Sigmoid colon (tissue), 7 donors: ENCODE measurements at regions of chr1 and their contacts with region 1.

Region 1: GRCh38 chr1:16613185-16614147 is at the start of gene NBPF1:
- DNase-seq: peak; percentile 99
- H3K4me3 ChIP-seq: peak within 1 kb of the TSS; percentile 51 to 65 (median 55)
- H3K27ac ChIP-seq: peak within 1 kb of the TSS; percentile 76 to 84 (median 80)
- H3K4me1 ChIP-seq: peaks cover 0 to 24% (median 21%) of the 10 kb centered on the region in 4 donors
- H3K27me3 ChIP-seq: no peaks in the 10 kb centered on the region
- CTCF ChIP-seq: no peak
- EP300 ChIP-seq: peak in 2 of 4 donors; percentile 10 to 57
- POLR2A ChIP-seq: peak; percentile 75 to 89
- total RNA-seq, gene NBPF1: 30.3 to 80.9 (median 37.2) TPM

Region 2: GRCh38 chr1:16644193-16644481 is 30.7 kb after region 1 on chr1:
- intact Hi-C with region 1: loop called (anchors 2 kb)
- DNase-seq: no peak
- H3K4me3 ChIP-seq: peak overlapping the region; percentile 48 to 62 (median 60)
- H3K27ac ChIP-seq: peak overlapping the region; percentile 79 to 83 (median 80)
- H3K4me1 ChIP-seq: peaks cover 0 to 37% (median 32%) of the 10 kb centered on the region in 4 donors
- H3K27me3 ChIP-seq: peaks cover 0 to 12% (median 0%) of the 10 kb centered on the region in 3 donors
- CTCF ChIP-seq: no peak
- EP300 ChIP-seq: no peak
- POLR2A ChIP-seq: no peak

Region 3: DNA sequence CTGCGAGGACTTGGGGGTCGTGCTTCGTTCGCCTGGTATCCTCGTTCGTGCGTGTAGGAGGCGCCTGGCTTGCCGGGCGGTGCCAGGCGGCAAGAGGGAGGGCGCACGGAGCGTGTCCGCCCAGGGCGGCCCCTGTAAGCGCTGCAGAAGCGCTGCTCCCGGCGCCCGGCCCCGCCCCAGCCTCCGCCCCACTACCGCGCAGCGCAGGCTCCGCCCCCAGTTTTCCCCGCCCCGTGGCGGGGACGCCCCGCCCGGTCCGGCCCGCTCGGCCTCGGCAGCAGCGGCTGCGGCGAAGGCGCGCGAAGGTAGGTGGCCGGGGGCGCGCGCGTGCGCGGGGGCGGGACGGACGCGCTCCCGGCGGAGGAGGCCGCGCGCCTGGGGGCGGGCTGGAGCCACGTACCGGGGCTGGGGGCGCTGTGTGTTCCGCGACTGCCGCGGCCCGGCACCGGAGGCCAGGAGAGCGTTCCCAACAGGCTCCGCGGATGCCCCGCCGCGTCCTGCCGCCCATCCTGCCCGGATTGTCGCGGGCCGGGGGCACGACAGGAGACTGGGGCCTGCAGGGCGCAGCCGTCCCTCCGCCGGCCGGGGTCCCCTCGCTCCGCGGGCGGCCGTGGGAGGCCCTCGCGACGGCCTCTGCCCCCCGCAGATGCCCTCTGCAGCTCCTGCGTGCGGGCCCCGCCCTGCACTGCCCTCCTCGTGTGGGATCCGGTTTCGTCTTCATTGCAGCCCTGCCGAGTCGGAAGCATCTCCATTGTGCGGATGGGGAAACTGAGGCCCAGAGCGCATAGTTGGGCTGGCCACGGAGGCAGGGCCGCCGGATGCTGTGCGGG is 300.6 kb after region 1 on chr1:
- intact Hi-C with region 1: loop called (anchors 10 kb)
- DNase-seq: peak; percentile 97
- H3K4me3 ChIP-seq: peak overlapping the region; percentile 52 to 96 (median 83)
- H3K27ac ChIP-seq: peak overlapping the region; percentile 83 to 91 (median 86)
- H3K4me1 ChIP-seq: peaks cover 0 to 33% (median 18%) of the 10 kb centered on the region in 4 donors
- H3K27me3 ChIP-seq: no peaks in the 10 kb centered on the region
- CTCF ChIP-seq: no peak
- EP300 ChIP-seq: no peak
- POLR2A ChIP-seq: peak; percentile 10 to 15

Region 4: GRCh38 chr1:17053685-17054410 is 440.4 kb after region 1 on chr1 and contains the start of gene SDHB:
- intact Hi-C with region 1: loop called (anchors 10 kb)
- DNase-seq: peak; percentile 100
- H3K4me3 ChIP-seq: peak within 1 kb of the TSS; percentile 67 to 90 (median 86)
- H3K27ac ChIP-seq: peak within 1 kb of the TSS; percentile 89 to 98 (median 94)
- H3K4me1 ChIP-seq: peaks cover 0 to 30% (median 16%) of the 10 kb centered on the region in 4 donors
- H3K27me3 ChIP-seq: no peaks in the 10 kb centered on the region
- CTCF ChIP-seq: no peak
- EP300 ChIP-seq: peak in 1 of 4 donors; percentile 71
- POLR2A ChIP-seq: peak; percentile 94
- total RNA-seq, gene SDHB: 109 to 228 (median 141) TPM